Left cardiac atrium (tissue), 4 donors: ENCODE measurements at regions of chr9 and their contacts with region 1.

Region 1: DNA sequence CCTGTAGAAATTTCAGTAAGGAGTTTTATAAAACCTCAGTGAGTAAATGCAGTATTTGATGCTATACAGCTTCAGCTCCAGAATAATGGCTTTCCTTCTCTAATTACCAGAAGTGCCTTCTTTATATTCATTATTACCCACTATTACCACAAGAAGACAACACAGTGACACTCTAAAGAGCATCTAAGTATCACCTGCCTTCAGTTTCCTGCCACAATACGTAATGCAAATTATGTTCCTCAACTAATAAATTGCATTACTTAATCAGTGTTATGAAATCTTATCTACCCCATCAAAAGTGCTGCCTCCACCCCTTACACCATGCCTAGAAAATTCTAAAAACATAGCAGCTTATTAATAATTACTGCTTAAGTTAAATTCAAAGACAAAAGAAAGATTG is 91.9 kb downstream of the TRPM6 start:
- DNase-seq: no peak
- ATAC-seq: no peak

Region 2: GRCh38 chr9:74887041-74887980 is 91.5 kb after region 1 on chr9 and contains the start of gene TRPM6:
- intact Hi-C with region 1: loop called in 1 of 2 experiments (anchors 10 kb)
- DNase-seq: peak; percentile 90
- ATAC-seq: peak; percentile 86 to 96
- total RNA-seq, gene TRPM6: 0.44 to 0.71 TPM